Endothelial cell of umbilical vein (primary cell): ENCODE measurements at regions of chr22 and their contacts with region 1.

Region 1: GRCh38 chr22:20531315-20532201 is 24.1 kb downstream of the MED15 start:
- DNase-seq: peak; percentile 64
- H3K4me3 ChIP-seq: no peak overlapping the region
- H3K27ac ChIP-seq: peak overlapping the region; percentile 75
- H3K4me1 ChIP-seq: peaks cover 41% of the 10 kb centered on the region
- H3K27me3 ChIP-seq: no peaks in the 10 kb centered on the region
- CTCF ChIP-seq: no peak
- POLR2A ChIP-seq: no peak

Region 2: GRCh38 chr22:20562461-20563247 is 31.1 kb after region 1 on chr22:
- CTCF ChIA-PET with region 1: interaction called, 14 read pairs
- POLR2A ChIA-PET with region 1: no interaction called
- dilution Hi-C with region 1: no loop called
- intact Hi-C with region 1: no loop called
- DNase-seq: no peak
- H3K4me3 ChIP-seq: no peak overlapping the region
- H3K27ac ChIP-seq: no peak overlapping the region
- H3K4me1 ChIP-seq: no peaks in the 10 kb centered on the region
- H3K27me3 ChIP-seq: no peaks in the 10 kb centered on the region
- CTCF ChIP-seq: no peak
- POLR2A ChIP-seq: no peak

Region 3: DNA sequence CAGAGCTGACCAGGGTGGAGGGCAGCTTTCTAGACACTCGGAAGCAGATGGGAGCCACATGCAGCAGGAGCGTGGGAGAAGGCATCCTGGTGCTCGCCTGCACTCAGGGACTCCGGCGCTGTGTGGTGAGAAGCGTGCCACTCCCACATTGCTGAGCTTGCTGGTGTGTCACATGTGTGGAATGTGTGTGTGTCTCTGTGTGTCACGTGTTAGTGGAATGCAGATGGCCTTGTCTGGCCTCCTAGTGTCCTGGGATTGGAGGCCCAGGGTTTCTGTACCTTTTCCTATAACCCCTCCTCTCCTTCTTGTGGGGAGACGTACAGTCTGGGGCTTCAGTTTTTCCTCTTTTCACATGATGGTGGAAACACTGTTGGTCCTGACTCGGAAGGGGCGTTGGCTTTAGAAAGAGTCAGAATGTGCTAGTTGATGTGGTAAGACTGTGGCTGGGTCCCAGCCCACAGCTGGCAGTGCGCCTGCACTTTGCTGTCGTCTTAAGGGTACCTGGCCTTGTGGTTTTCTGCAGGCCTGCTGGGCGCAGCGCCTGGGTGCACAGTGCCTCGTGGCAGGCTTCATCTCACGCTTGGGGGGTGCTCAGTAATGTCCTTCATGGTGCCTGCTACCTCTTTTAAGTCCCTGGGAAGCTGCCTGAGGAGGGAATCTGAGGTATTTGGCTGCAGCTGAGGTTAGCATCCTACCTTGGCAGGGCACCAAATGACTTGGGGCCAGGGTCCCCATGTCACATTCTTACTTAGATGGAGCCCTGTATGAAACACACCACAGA is 37.6 kb after region 1 on chr22:
- CTCF ChIA-PET with region 1: interaction called, 14 read pairs
- POLR2A ChIA-PET with region 1: no interaction called
- dilution Hi-C with region 1: no loop called
- intact Hi-C with region 1: no loop called
- DNase-seq: no peak
- H3K4me3 ChIP-seq: no peak overlapping the region
- H3K27ac ChIP-seq: no peak overlapping the region
- H3K4me1 ChIP-seq: no peaks in the 10 kb centered on the region
- H3K27me3 ChIP-seq: no peaks in the 10 kb centered on the region
- CTCF ChIP-seq: no peak
- POLR2A ChIP-seq: no peak